OCI-LY7 (cell line): ENCODE measurements at regions of chr9 and their contacts with region 1.

Region 1: GRCh38 chr9:120868676-120869359 is 8.2 kb downstream of the PHF19 start:
- DNase-seq: peak; percentile 95
- H3K4me3 ChIP-seq: peak overlapping the region; percentile 57
- H3K27ac ChIP-seq: peak overlapping the region; percentile 17
- H3K4me1 ChIP-seq: peaks cover 32% of the 10 kb centered on the region
- CTCF ChIP-seq: peak; percentile 81

Region 2: GRCh38 chr9:120842690-120843499 is 25.9 kb before region 1 on chr9 and contains the start of gene PSMD5:
- CTCF ChIA-PET with region 1: no interaction called
- POLR2A ChIA-PET with region 1: interaction called, 4 read pairs
- intact Hi-C with region 1: loop called (anchors 1 kb)
- DNase-seq: peak; percentile 98
- H3K4me3 ChIP-seq: peak within 1 kb of the TSS; percentile 93
- H3K27ac ChIP-seq: peak within 1 kb of the TSS; percentile 59
- H3K4me1 ChIP-seq: peaks cover 35% of the 10 kb centered on the region
- CTCF ChIP-seq: 0 out of 2 replicates have a peak, but pooled peaks have one; percentile 22
- total RNA-seq, gene PSMD5: 10.0 and 12.0 TPM in 2 replicates